ENCODE measurements at regions of chr2 and their contacts with region 1.

Region 1: DNA sequence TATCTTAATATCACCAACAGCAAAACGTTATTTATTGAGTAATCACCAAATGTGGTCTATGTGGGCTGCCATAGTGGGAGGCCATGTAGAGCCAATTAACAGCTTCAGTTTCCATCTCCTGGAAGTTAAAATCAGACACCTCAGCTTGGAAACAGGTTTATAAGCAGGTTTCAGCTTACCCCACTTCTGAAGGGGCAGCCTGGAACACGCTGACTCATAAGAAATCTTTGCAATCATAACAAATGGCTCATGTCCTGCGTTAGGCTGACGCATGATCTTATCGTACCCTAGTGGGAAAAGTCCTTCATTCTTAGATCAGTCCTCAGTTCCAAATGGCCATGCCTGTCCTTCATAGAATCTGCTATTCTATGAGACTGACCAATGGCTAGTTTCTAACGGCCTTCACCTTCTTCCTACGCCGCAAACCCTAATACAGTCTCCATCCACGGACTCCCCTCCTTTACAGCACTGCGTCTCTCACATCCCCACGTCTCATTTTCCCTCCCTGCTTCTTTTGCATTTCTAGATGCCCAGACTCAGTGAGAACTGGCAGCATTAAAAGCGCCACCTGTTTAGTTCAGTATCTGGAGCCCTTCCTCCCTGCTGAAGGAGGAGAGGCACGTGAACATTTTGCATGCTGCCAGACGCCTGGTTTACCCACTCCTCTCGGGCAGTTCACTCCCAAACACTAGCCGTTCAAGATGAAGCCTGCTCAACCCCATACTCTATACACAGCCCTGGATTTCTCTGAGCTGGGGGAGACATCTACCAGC is 24.2 kb upstream of the BZW1 start:
- DNase-seq: no peak

Region 2: GRCh38 chr2:200742426-200742825 is 45.1 kb before region 1 on chr2:
- intact Hi-C with region 1: loop called (anchors 5 kb)
- DNase-seq: peak; percentile 82